ENCODE measurements at regions of chr18 and their contacts with region 1.

Region 1: GRCh38 chr18:8367217-8367988 is 241.8 kb upstream of the RAB12 start:
- H3K4me3 ChIP-seq: peak overlapping the region; percentile 9
- H3K27ac ChIP-seq: 0 out of 2 replicates have a peak overlapping the region, but pooled peaks have one; percentile 31
- H3K4me1 ChIP-seq: peaks cover 6% of the 10 kb centered on the region; the same call in 1 of the 2 replicates
- CTCF ChIP-seq: peak; percentile 78

Region 2: DNA sequence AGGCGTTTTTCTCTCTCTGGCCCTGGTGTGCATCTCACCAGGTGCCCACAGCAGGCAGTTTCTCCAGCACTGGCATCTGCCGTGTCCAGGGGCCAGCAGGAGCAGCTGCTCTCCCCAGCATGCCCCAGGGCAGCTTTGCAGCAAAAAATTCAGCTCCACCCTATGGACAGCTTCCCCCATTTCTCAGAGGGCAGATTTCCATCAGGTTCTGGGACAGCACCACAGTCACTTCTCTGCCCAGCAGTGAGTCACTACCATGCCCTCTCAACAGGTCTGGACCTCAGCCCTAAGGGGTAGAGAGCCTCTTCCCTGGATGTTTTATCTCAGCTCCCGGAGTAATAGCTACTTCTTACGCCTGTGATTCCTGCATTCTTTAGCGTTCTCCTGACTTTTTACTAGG is 71.7 kb after region 1 on chr18:
- CTCF ChIA-PET with region 1: interaction called, 11 read pairs
- POLR2A ChIA-PET with region 1: no interaction called
- H3K4me3 ChIP-seq: no peak overlapping the region
- H3K27ac ChIP-seq: no peak overlapping the region
- H3K4me1 ChIP-seq: no peaks in the 10 kb centered on the region
- CTCF ChIP-seq: no peak